ENCODE measurements at regions of chr6 and their contacts with region 1.

Region 1: GRCh38 chr6:32796848-32797776 is 19.7 kb downstream of the HLA-DOB start:
- DNase-seq: peak; percentile 66
- ATAC-seq: peak; percentile 76 to 86

Region 2: GRCh38 chr6:32118782-32119628 is 678.1 kb before region 1 on chr6:
- intact Hi-C with region 1: no loop called
- DNase-seq: peak; percentile 87
- ATAC-seq: peak; percentile 66 to 83

Region 3: DNA sequence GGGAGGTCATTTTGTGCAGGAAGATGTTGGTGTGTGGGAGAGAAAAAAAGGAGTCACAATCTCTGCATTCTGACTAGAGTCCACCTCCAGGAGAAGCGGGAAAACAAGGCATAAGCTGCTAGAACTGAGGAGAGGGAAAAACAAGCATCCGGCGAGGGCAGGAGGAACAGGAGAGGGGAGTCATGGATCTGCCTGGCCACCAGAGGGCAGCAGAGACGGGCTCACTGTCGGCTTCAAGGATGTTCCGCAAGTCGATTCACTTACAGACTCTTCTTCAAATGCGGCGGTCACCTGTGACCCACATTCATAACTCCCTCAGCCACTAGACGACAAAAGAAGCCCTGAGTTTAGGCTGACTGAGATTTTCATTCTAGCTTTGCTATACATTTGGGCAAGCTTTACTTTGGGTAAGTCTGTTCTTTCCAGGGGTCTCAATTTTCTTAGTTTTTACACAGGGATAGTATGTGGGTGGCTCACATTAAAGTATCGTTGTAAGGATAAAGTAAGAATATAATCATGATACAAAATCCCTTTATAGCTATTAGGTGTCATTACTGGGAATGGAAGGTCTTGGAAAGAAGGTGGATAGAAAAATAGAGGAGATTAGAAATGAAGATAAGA is 383.6 kb before region 1 on chr6:
- intact Hi-C with region 1: loop called (anchors 2 to 5 kb)
- DNase-seq: peak; percentile 75
- ATAC-seq: peak; percentile 84

Measured in left cardiac atrium (tissue), 4 donors.